Naive thymus-derived CD4-positive, alpha-beta T cell (primary cell): ENCODE measurements at regions of chr5 and their contacts with region 1.

Region 1: GRCh38 chr5:57613726-57614125 is 131.1 kb upstream of the ACTBL2 start:
- DNase-seq: no peak
- ATAC-seq: no peak
- H3K4me3 ChIP-seq: no peak overlapping the region
- H3K4me3 Mint-ChIP-seq: no peak overlapping the region
- H3K27ac ChIP-seq: no peak overlapping the region
- H3K27ac Mint-ChIP-seq: no peak overlapping the region
- H3K4me1 ChIP-seq: no peaks in the 10 kb centered on the region
- H3K4me1 Mint-ChIP-seq: peaks cover 0 to 5% (median 0%) of the 10 kb centered on the region in 7 donors
- H3K27me3 ChIP-seq: no peaks in the 10 kb centered on the region
- H3K27me3 Mint-ChIP-seq: peaks cover 11 to 31% (median 18%) of the 10 kb centered on the region in 5 donors

Region 2: GRCh38 chr5:57383093-57383861 is 230.4 kb before region 1 on chr5:
- CTCF ChIA-PET with region 1: no interaction called
- POLR2A ChIA-PET with region 1: no interaction called
- intact Hi-C with region 1: loop called in 1 of 2 experiments (anchors 10 kb)
- DNase-seq: peak in 1 of 9 donors; percentile 35
- ATAC-seq: peak; percentile 31
- H3K4me3 ChIP-seq: no peak overlapping the region
- H3K4me3 Mint-ChIP-seq: peak overlapping the region in 1 of 10 donors; percentile 5
- H3K27ac ChIP-seq: no peak overlapping the region
- H3K27ac Mint-ChIP-seq: peak overlapping the region in 1 of 9 donors; percentile 46
- H3K4me1 ChIP-seq: no peaks in the 10 kb centered on the region
- H3K4me1 Mint-ChIP-seq: peaks cover 2 to 12% (median 8%) of the 10 kb centered on the region in 7 donors
- H3K27me3 ChIP-seq: no peaks in the 10 kb centered on the region
- H3K27me3 Mint-ChIP-seq: peaks cover 0 to 3% (median 0%) of the 10 kb centered on the region in 5 donors